Mammary epithelial cell (primary cell): ENCODE measurements at regions of chr16 and their contacts with region 1.

Region 1: DNA sequence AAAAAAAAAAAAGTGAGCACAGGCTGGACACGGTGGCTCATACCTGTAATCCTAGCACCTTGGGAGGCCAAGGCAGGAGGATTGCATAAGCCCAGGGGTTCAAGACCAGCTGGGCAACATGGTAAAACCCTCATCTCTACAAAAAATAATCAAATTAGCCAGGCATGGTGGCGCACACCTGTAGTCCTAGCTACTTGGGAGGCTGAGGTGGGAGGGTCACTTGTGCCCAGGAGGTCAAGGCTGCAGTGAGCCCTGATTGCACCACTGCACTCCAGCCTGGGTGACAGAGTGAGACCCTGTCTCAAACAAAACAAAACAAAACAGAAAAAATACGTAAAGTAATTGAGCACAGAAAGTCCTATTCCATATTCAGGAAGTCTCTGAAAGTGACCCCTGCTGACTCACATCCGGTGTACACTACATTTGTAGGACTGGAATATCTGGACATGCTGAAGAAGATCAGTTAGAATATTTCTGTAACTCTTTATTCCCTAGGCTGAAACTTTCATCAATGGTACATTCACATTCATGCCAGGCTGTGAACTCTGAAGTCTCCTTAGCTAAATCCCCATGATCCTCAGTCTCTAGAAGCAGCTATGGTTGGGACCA is 66.0 kb upstream of the HAS3 start:
- DNase-seq: no peak
- H3K4me3 ChIP-seq: no peak overlapping the region
- H3K27ac ChIP-seq: peak overlapping the region; percentile 50
- H3K4me1 ChIP-seq: peaks cover 21% of the 10 kb centered on the region
- H3K27me3 ChIP-seq: no peaks in the 10 kb centered on the region
- CTCF ChIP-seq: no peak

Region 2: GRCh38 chr16:68843482-68844210 is 195.8 kb before region 1 on chr16 and contains the start of gene TANGO6:
- CTCF ChIA-PET with region 1: no interaction called
- dilution Hi-C with region 1: loop called (anchors 10 kb)
- in situ Hi-C with region 1: no loop called
- intact Hi-C with region 1: no loop called
- DNase-seq: peak; percentile 64
- H3K4me3 ChIP-seq: peak within 1 kb of the TSS; percentile 71 to 75 (median 73)
- H3K27ac ChIP-seq: peak within 1 kb of the TSS; percentile 52
- H3K4me1 ChIP-seq: peaks cover 4% of the 10 kb centered on the region
- H3K27me3 ChIP-seq: no peaks in the 10 kb centered on the region
- CTCF ChIP-seq: peak in 1 of 2 donors; percentile 20
- total RNA-seq, gene TANGO6: 18.2 to 24.5 TPM

Region 3: GRCh38 chr16:68936736-68937631 is 102.5 kb before region 1 on chr16:
- CTCF ChIA-PET with region 1: interaction called, 21 read pairs
- dilution Hi-C with region 1: no loop called
- in situ Hi-C with region 1: no loop called
- intact Hi-C with region 1: no loop called
- DNase-seq: peak; percentile 98
- H3K4me3 ChIP-seq: peak overlapping the region in 1 of 3 experiments; percentile 16
- H3K27ac ChIP-seq: peak overlapping the region; percentile 58
- H3K4me1 ChIP-seq: peaks cover 39% of the 10 kb centered on the region
- H3K27me3 ChIP-seq: no peaks in the 10 kb centered on the region
- CTCF ChIP-seq: no peak

Region 4: GRCh38 chr16:68993885-68994284 is 45.6 kb before region 1 on chr16:
- CTCF ChIA-PET with region 1: no interaction called
- dilution Hi-C with region 1: no loop called
- in situ Hi-C with region 1: no loop called
- intact Hi-C with region 1: no loop called
- DNase-seq: peak; percentile 84
- H3K4me3 ChIP-seq: peak overlapping the region in 1 of 3 experiments; percentile 20
- H3K27ac ChIP-seq: peak overlapping the region; percentile 92
- H3K4me1 ChIP-seq: peaks cover 74% of the 10 kb centered on the region
- H3K27me3 ChIP-seq: no peaks in the 10 kb centered on the region
- CTCF ChIP-seq: no peak